CD4-positive, alpha-beta T cell (primary cell): ENCODE measurements at regions of chr1 and their contacts with region 1.

Region 1: DNA sequence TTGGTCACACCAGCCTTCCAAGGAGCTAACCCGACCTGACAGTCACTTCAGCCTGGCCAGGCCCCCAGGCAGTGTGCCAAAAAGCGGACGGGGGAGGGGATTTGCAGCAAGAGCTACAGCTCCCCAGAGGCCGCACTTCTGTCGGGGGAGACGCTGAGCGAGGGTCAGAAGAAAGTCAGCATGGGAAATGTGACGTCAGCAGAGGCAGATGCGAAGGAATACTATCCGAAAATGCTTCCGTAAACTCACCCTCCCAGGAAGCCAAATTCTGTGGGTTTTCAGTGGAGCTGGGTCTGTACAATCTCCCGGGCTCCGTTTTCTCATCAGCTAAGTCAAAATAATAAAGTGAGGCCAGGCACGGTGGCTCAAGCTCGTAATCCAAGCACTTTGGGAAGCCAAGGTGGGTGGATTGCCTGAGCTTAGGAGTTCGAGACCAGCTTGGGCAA is 28.5 kb upstream of the ECE1 start:
- DNase-seq: no peak
- ATAC-seq: no peak
- H3K4me3 ChIP-seq: no peak overlapping the region
- H3K4me3 Mint-ChIP-seq: no peak overlapping the region
- H3K27ac ChIP-seq: no peak overlapping the region
- H3K27ac Mint-ChIP-seq: no peak overlapping the region
- H3K4me1 ChIP-seq: peaks cover 46% of the 10 kb centered on the region
- H3K4me1 Mint-ChIP-seq: peaks cover 59% of the 10 kb centered on the region
- H3K27me3 ChIP-seq: no peaks in the 10 kb centered on the region
- H3K27me3 Mint-ChIP-seq: no peaks in the 10 kb centered on the region
- CTCF ChIP-seq: no peak

Region 2: GRCh38 chr1:21302747-21303715 is 15.7 kb before region 1 on chr1:
- CTCF ChIA-PET with region 1: no interaction called
- POLR2A ChIA-PET with region 1: interaction called, 8 read pairs
- intact Hi-C with region 1: loop called in 1 of 2 experiments (anchors 2 kb)
- DNase-seq: peak in 1 of 14 experiments; percentile 49
- ATAC-seq: no peak
- H3K4me3 ChIP-seq: no peak overlapping the region
- H3K4me3 Mint-ChIP-seq: no peak overlapping the region
- H3K27ac ChIP-seq: no peak overlapping the region
- H3K27ac Mint-ChIP-seq: peak overlapping the region; percentile 69
- H3K4me1 ChIP-seq: peaks cover 77% of the 10 kb centered on the region
- H3K4me1 Mint-ChIP-seq: peaks cover 79% of the 10 kb centered on the region
- H3K27me3 ChIP-seq: no peaks in the 10 kb centered on the region
- H3K27me3 Mint-ChIP-seq: no peaks in the 10 kb centered on the region
- CTCF ChIP-seq: no peak

Region 3: GRCh38 chr1:21497466-21498061 is 178.8 kb after region 1 on chr1:
- CTCF ChIA-PET with region 1: no interaction called
- POLR2A ChIA-PET with region 1: no interaction called
- intact Hi-C with region 1: no loop called
- DNase-seq: no peak
- ATAC-seq: no peak
- H3K4me3 ChIP-seq: no peak overlapping the region
- H3K4me3 Mint-ChIP-seq: no peak overlapping the region
- H3K27ac ChIP-seq: no peak overlapping the region
- H3K27ac Mint-ChIP-seq: no peak overlapping the region
- H3K4me1 ChIP-seq: no peaks in the 10 kb centered on the region
- H3K4me1 Mint-ChIP-seq: no peaks in the 10 kb centered on the region
- H3K27me3 ChIP-seq: peaks cover 0 to 5% of the 10 kb centered on the region in 2 experiments
- H3K27me3 Mint-ChIP-seq: peaks cover 4% of the 10 kb centered on the region
- CTCF ChIP-seq: no peak